ENCODE measurements at regions of chr7 and their contacts with region 1.

Region 1: GRCh38 chr7:148838905-148839304 is 45.2 kb downstream of the EZH2 start:
- DNase-seq: no peak
- H3K4me3 ChIP-seq: no peak overlapping the region
- H3K27me3 ChIP-seq: no peaks in the 10 kb centered on the region
- CTCF ChIP-seq: no peak

Region 2: DNA sequence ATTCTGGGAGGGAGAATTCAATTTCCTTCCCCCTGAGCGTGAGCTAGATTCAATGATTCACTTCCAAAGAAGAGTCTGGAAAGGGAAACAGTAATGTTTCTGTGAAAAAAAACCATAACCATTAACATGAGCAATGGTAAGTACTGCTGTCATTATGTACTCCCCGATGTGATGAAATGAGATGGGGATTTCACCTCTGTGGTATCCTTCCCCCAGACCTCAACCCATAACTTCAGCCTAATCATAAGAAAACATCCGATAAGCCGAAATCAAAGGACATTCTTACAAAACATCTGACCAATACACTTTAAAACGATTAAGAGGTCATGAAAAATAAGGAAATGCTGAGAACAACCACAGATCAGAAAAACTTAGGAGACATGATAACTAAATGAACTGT is 18.0 kb after region 1 on chr7:
- CTCF ChIA-PET with region 1: interaction called, 12 read pairs
- POLR2A ChIA-PET with region 1: no interaction called
- DNase-seq: no peak
- H3K4me3 ChIP-seq: no peak overlapping the region
- H3K27me3 ChIP-seq: no peaks in the 10 kb centered on the region
- CTCF ChIP-seq: no peak

Region 3: DNA sequence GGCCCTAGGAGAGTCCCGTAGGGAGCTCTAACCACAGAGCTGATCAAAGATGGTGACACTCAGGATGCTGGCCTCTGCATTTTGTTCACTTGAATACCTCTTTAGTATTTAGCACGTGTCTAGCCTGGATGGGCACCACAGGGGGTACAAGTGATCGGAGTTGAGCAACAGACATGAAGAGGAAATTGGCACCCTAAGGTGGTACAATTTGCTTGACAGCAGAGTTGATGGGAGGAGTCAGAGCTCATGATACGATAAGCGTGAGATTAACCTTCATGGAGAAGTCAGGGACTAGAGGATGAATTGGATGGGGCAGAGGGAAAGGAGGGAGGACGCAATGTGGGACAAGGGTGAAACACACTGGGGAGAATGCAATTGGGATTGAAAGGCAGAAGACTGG is 390.6 kb after region 1 on chr7:
- CTCF ChIA-PET with region 1: no interaction called
- POLR2A ChIA-PET with region 1: no interaction called
- DNase-seq: no peak
- H3K4me3 ChIP-seq: no peak overlapping the region
- H3K27me3 ChIP-seq: no peaks in the 10 kb centered on the region
- CTCF ChIP-seq: no peak

Measured in BJ (cell line).